ENCODE measurements at regions of chr14 and their contacts with region 1.

Region 1: GRCh38 chr14:33839193-33840076 is 111.4 kb downstream of the EGLN3 start:
- DNase-seq: no peak
- ATAC-seq: no peak
- H3K4me3 Mint-ChIP-seq: no peak overlapping the region
- H3K27ac Mint-ChIP-seq: no peak overlapping the region
- H3K4me1 Mint-ChIP-seq: no peaks in the 10 kb centered on the region
- H3K27me3 Mint-ChIP-seq: no peaks in the 10 kb centered on the region
- CTCF ChIP-seq: no peak

Region 2: DNA sequence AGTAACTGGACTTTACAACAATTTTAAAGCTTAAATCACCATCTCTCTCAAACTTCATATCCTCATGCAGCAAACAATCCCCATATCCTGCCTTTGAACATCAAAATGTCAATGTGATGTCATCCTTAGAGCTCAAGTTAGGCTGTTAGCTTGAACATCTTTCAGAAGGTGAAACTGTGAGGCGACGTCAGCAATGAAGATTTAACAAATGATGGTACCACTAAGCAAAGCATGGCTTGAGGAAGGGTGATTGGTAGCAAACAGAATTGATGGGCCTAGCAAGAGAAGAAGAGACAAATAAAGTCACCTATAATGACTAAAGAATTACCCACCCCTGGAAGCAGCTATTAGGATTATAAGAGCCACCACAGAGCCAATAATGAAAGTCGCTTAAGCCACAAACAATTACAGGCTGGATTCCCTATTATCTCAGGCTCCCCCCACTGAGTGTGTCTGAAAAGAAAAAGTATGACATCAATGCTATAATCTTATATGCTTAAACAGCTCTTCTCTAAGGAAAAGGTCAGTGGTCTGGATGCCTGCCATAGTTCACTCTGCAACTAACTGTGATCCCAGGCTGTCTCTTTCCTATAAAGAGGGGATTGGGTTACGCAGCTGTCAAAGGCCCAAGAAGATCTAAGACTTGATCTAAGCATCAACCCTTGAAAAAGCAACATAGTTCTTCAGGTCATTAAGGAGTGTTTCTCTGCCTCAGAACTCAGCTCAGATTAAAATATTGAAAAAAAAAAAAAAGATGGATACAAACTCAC is 93.3 kb after region 1 on chr14:
- CTCF ChIA-PET with region 1: no interaction called
- POLR2A ChIA-PET with region 1: no interaction called
- intact Hi-C with region 1: no loop called
- DNase-seq: no peak
- ATAC-seq: no peak
- H3K4me3 Mint-ChIP-seq: no peak overlapping the region
- H3K27ac Mint-ChIP-seq: no peak overlapping the region
- H3K4me1 Mint-ChIP-seq: no peaks in the 10 kb centered on the region
- H3K27me3 Mint-ChIP-seq: no peaks in the 10 kb centered on the region
- CTCF ChIP-seq: no peak

Region 3: GRCh38 chr14:34098045-34098984 is 258.9 kb after region 1 on chr14:
- CTCF ChIA-PET with region 1: interaction called, 5 read pairs
- POLR2A ChIA-PET with region 1: no interaction called
- intact Hi-C with region 1: loop called (anchors 1 kb)
- DNase-seq: no peak
- ATAC-seq: no peak
- H3K4me3 Mint-ChIP-seq: no peak overlapping the region
- H3K27ac Mint-ChIP-seq: no peak overlapping the region
- H3K4me1 Mint-ChIP-seq: no peaks in the 10 kb centered on the region
- H3K27me3 Mint-ChIP-seq: peaks cover 2% of the 10 kb centered on the region
- CTCF ChIP-seq: no peak

Region 4: GRCh38 chr14:34300882-34301734 is 461.7 kb after region 1 on chr14:
- CTCF ChIA-PET with region 1: no interaction called
- POLR2A ChIA-PET with region 1: no interaction called
- intact Hi-C with region 1: loop called (anchors 5 kb)
- DNase-seq: no peak
- ATAC-seq: no peak
- H3K4me3 Mint-ChIP-seq: no peak overlapping the region
- H3K27ac Mint-ChIP-seq: no peak overlapping the region
- H3K4me1 Mint-ChIP-seq: no peaks in the 10 kb centered on the region
- H3K27me3 Mint-ChIP-seq: no peaks in the 10 kb centered on the region
- CTCF ChIP-seq: no peak

Region 5: GRCh38 chr14:34322940-34323418 is 483.5 kb after region 1 on chr14:
- CTCF ChIA-PET with region 1: interaction called, 5 read pairs
- POLR2A ChIA-PET with region 1: no interaction called
- intact Hi-C with region 1: loop called (anchors 1 kb)
- DNase-seq: peak; percentile 37
- ATAC-seq: peak; percentile 60
- H3K4me3 Mint-ChIP-seq: no peak overlapping the region
- H3K27ac Mint-ChIP-seq: no peak overlapping the region
- H3K4me1 Mint-ChIP-seq: no peaks in the 10 kb centered on the region
- H3K27me3 Mint-ChIP-seq: peaks cover 6% of the 10 kb centered on the region
- CTCF ChIP-seq: no peak

Measured in activated B cell treated with CpG ODN at 0.5 μM for 24 hours (primary cell).